ENCODE measurements at regions of chr3 and their contacts with region 1.

Region 1: DNA sequence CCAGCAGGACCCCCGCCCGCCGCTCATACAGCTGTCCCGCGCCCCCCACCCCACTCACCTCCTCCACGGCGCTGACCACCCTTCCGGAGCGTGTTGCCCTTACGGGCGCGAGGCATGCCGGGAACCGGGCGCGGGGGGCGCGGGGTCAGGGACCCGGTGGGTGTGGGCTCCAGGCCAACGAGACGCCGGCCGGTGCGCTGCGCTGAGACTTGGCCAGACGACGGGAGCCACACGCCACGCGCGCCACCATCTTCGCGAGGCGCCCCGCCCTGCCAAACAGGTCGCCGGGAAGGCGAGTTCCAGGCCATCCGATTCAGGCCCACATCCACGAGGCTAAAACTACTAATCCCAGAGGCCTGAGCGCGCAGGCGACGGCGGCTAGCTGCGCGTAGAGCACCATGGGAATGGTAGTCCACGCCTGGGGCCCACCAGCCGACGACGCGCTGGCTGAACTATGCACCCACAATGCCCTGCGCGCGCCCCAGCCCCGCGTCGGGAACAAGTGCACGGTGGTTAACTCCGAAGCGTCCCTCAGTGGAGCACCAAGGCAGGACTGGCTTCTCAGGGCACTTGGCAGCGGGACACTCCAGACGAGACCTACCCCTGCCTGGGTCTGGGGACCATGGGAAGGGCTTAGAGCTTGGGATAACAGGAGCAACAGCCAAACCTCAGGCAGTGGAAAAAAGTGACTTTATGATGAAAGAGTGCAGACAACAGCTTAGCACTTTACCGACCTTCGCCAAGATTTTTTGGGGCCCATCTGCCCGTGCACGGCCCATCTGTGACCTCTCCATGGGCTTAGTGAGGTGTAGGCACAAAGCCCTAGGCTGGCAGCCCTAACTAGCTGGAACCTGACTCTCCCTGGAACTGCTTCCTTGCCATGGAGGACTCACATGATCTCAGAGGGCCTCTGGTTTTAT is at the start of gene IFRD2:
- DNase-seq: peak; percentile 79
- H3K4me3 ChIP-seq: peak within 1 kb of the TSS; percentile 87
- CTCF ChIP-seq: no peak

Region 2: GRCh38 chr3:50272911-50273693 is 19.3 kb before region 1 on chr3:
- CTCF ChIA-PET with region 1: interaction called, 10 read pairs
- POLR2A ChIA-PET with region 1: interaction called, 3 read pairs
- DNase-seq: no peak
- H3K4me3 ChIP-seq: peak overlapping the region; percentile 52
- CTCF ChIP-seq: peak; percentile 98

Region 3: GRCh38 chr3:50304601-50305000 is 12.2 kb after region 1 on chr3:
- CTCF ChIA-PET with region 1: no interaction called
- POLR2A ChIA-PET with region 1: no interaction called
- DNase-seq: no peak
- H3K4me3 ChIP-seq: no peak overlapping the region
- CTCF ChIP-seq: no peak